ENCODE measurements at regions of chr14 and their contacts with region 1.

Region 1: DNA sequence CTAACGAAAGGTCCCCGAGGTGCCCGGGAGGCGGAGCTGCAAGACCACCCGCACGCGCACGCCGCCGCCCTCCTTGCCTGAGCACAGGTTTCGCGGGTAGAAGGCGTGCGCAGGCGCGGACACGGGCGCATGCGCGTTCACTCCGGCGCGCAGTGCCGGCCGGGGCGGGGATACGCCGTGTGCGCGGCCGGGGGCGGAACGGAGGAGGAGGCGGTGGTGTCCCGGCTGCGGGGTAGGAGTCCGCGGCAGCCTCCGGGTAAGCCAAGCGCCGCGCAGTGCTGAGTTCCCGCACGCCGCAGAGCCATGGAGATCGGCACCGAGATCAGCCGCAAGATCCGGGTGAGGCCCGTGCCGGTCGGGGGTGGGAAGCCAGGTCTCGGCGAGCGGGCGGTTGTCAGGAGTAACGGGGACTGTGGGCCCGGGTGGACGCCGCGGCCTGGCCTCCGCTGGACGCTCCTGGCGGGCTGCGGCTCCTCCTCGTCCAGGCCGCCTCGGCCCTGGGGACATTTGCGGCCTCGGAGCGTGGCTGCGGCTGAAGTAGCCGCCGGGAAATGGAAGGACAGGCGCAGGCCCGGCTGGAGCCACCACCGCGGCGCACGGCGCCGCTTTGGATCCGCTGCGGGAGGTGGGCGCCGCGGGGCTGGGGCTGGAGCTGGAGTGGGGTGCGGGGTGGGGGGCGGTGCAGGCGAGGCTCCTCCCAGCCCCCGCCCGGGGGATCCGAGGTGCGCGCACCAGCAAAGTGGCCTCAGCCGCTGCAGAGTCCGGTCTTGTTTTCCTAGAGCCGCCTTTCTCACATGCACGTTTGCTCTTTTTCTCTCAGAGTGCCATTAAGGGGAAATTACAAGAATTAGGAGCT is at the start of gene ZC3H14:
- DNase-seq: peak; percentile 60 to 67
- H3K4me3 ChIP-seq: peak within 1 kb of the TSS; percentile 69
- H3K27ac ChIP-seq: peak within 1 kb of the TSS; percentile 39; the same call in 1 of the 2 replicates
- H3K4me1 ChIP-seq: peaks cover 16% of the 10 kb centered on the region; the same call in 1 of the 2 replicates
- H3K27me3 ChIP-seq: no peaks in the 10 kb centered on the region
- CTCF ChIP-seq: no peak
- total RNA-seq, gene ZC3H14: 14.6 and 20.2 TPM in 2 replicates

Region 2: DNA sequence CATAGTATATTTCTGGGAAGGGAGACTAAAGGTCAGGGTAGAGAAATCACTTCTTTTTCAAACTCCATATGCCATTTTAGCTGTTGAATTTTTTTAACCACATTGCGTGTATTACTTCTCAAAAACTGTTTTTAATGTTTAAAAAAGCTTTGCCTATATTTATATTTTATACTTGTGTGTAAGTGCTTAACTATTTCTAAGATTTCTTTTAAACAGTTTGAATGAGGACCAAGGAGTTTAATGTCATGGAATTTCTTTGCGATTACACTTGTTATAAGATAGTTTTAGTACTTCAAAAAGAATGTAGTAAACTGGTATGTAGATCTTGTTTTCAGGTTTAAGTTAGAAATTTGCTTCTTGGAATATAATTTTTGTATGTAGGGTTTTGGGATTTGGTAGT is 170.4 kb before region 1 on chr14:
- CTCF ChIA-PET with region 1: no interaction called
- POLR2A ChIA-PET with region 1: no interaction called
- intact Hi-C with region 1: no loop called
- DNase-seq: no peak
- H3K4me3 ChIP-seq: no peak overlapping the region
- H3K27ac ChIP-seq: no peak overlapping the region
- H3K4me1 ChIP-seq: no peaks in the 10 kb centered on the region
- H3K27me3 ChIP-seq: no peaks in the 10 kb centered on the region
- CTCF ChIP-seq: no peak

Region 3: GRCh38 chr14:88492272-88493089 is 70.6 kb before region 1 on chr14:
- CTCF ChIA-PET with region 1: no interaction called
- POLR2A ChIA-PET with region 1: no interaction called
- intact Hi-C with region 1: loop called (anchors 5 kb)
- DNase-seq: peak in 1 of 2 experiments; percentile 19
- H3K4me3 ChIP-seq: no peak overlapping the region
- H3K27ac ChIP-seq: no peak overlapping the region
- H3K4me1 ChIP-seq: no peaks in the 10 kb centered on the region
- H3K27me3 ChIP-seq: no peaks in the 10 kb centered on the region
- CTCF ChIP-seq: peak; percentile 79